ENCODE measurements at regions of chr3 and their contacts with region 1.

Region 1: DNA sequence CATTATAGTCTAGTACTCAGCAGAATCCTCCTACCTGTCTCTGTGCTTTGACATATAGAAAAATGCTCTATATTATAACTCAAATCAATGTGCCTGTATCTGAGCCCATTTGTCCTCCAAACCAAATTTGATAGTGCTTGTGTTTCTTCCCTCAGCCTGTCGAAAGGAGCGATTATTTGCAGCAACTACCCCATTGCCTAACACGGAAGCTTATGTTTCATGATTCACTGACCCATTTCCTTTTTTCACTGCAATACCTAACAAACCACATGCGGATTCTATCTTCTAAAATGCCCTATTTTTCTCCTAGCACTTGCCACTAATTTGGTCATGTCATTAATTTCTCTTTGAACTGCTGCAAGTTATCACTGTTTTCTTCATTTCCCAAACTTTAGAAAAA is 1220.6 kb upstream of the CADM2 start:
- DNase-seq: no peak
- H3K4me3 ChIP-seq: no peak overlapping the region
- H3K27ac ChIP-seq: no peak overlapping the region
- H3K4me1 ChIP-seq: no peaks in the 10 kb centered on the region
- H3K27me3 ChIP-seq: no peaks in the 10 kb centered on the region
- CTCF ChIP-seq: no peak

Region 2: GRCh38 chr3:82850115-82850514 is 888.1 kb before region 1 on chr3:
- CTCF ChIA-PET with region 1: no interaction called
- POLR2A ChIA-PET with region 1: no interaction called
- intact Hi-C with region 1: no loop called
- DNase-seq: no peak
- H3K4me3 ChIP-seq: no peak overlapping the region
- H3K27ac ChIP-seq: no peak overlapping the region
- H3K4me1 ChIP-seq: no peaks in the 10 kb centered on the region
- H3K27me3 ChIP-seq: no peaks in the 10 kb centered on the region
- CTCF ChIP-seq: no peak

Region 3: DNA sequence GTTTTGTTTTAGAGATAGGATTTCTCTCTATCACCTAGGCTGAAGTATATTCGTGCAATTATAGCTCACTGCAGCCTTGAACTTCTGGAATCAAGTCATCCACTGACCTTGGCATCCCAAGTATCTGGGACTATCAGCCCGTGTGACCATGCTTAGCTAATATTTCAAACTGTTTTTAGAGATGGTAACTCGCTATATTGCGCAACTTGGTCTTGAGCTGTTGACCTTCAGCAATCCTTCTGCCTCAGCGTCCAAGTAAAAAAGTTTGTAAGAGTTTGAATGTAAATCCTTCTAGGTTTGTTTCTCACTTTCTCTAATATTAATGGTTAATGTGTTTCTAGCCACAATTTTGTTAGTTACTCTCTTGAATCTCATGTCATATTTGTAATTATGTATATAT is 22.9 kb before region 1 on chr3:
- CTCF ChIA-PET with region 1: no interaction called
- POLR2A ChIA-PET with region 1: no interaction called
- intact Hi-C with region 1: loop called (anchors 2 kb)
- DNase-seq: no peak
- H3K4me3 ChIP-seq: no peak overlapping the region
- H3K27ac ChIP-seq: no peak overlapping the region
- H3K4me1 ChIP-seq: no peaks in the 10 kb centered on the region
- H3K27me3 ChIP-seq: no peaks in the 10 kb centered on the region
- CTCF ChIP-seq: no peak